ENCODE measurements at regions of chr4 and their contacts with region 1.

Region 1: DNA sequence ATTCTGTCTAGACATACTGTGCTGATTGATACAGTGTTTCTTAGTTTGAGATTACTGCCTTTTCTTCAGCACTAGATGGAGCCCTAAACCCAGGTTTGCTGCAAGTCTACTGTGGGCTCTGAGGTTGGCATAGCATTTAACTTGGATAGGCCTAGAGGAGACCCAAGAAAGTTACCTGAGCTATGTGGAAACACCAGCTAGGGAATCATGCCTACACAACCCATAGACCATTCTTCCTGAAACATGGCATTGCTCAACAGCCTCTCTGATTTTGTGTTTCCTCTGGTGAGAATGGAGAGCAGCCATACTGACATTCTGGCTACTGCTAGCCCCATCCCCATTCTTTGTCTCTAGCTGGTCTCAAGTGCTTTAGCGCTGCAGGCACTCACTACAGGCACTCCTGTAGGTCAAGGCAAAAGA is 287.7 kb upstream of the PCDH18 start:
- DNase-seq: peak; percentile 20
- ATAC-seq: peak; percentile 99
- H3K4me3 Mint-ChIP-seq: no peak overlapping the region
- H3K27ac Mint-ChIP-seq: no peak overlapping the region
- H3K4me1 Mint-ChIP-seq: peaks cover 3% of the 10 kb centered on the region; the same call in 1 of the 2 replicates
- H3K27me3 Mint-ChIP-seq: no peaks in the 10 kb centered on the region
- CTCF ChIP-seq: no peak

Region 2: DNA sequence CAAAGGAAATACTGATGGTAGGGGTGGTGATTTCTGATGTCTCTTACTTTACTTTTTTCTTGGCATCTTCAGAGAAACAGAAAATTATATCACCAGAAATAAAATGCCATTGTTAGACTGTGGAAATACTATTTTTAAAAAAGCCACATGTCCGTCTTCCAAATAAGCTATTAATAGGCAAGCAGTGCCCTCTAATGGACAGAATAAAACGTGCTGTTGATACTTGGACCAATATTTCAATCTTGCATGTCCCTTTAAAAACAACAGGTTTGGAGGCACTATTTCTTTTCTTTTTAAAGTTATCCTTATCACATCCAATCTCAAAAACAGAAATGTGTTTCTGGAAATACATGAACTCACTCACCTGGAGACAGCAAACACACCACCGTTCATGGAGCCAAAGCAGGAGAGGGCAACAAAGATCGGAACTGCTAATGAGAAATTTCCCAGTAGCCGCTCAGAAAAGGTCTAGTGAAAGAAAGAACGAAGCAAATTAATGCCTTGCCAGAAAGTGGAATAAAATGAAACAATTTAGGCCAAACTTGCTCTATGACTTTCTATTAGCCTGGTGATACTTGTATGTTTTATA is 363.0 kb after region 1 on chr4:
- CTCF ChIA-PET with region 1: interaction called, 10 read pairs
- POLR2A ChIA-PET with region 1: no interaction called
- DNase-seq: no peak
- ATAC-seq: peak; percentile 43; the same call in 1 of the 2 replicates
- H3K4me3 Mint-ChIP-seq: no peak overlapping the region
- H3K27ac Mint-ChIP-seq: peak overlapping the region; percentile 64; the same call in 1 of the 2 replicates
- H3K4me1 Mint-ChIP-seq: peaks cover 30% of the 10 kb centered on the region
- H3K27me3 Mint-ChIP-seq: no peaks in the 10 kb centered on the region
- CTCF ChIP-seq: peak; percentile 45

Measured in WTC11 (cell line).